ENCODE measurements at regions of chr2 and their contacts with region 1.

Region 1: DNA sequence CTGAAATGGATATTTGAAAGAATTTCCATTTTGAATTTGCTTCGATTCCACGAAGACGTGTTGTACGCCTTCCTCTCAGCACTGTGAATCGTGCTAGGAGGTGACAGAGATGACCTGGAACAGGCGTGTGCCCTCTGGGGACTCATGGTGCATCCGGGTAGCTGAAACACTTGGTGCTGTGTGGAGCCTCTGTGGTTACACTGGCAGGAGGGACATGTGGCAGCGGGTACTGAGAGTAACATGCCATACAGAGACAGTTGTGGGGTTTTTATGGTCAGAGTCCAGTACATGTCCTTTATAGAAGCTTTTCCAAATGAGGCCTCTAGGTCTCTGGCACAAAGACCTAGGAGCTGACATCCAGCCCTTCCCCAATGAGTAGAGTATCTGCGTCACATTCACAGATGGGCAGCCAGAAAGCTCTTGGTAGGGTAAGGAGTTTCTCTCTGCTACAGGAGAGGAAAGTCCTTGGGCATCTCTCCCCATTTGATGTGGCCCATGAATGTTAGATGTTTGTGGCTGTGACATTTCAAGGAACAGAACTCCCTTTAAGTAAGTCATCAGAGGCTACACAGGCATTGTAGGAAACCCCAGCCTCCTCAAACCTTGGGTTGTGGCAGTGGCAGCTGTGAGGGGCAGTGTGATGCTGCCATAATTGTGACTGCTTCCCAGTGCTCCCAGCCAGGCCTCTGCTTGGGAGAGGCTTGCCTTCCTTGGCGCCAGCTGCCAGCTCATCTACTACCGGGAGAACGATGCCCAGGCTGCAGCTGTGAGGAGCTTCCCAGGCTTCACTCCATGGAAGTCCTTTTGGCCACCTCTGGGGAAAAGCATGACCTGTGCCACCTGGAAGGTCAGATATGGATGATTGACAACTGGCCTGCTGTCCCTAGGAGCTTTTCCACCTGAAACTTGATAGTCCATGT is 80.6 kb downstream of the ACOXL start:
- DNase-seq: no peak
- ATAC-seq: no peak; the same call in 1 of the 3 replicates
- H3K4me3 ChIP-seq: no peak overlapping the region
- H3K27ac ChIP-seq: no peak overlapping the region
- H3K4me1 ChIP-seq: no peaks in the 10 kb centered on the region
- H3K27me3 ChIP-seq: peaks cover 0 to 2% of the 10 kb centered on the region in 2 experiments; a peak in 2 of 4 replicates
- CTCF ChIP-seq: no peak
- EP300 ChIP-seq: no peak
- POLR2A ChIP-seq: no peak
- RAD21 ChIP-seq: no peak

Region 2: GRCh38 chr2:110157153-110157793 is 655.7 kb before region 1 on chr2:
- CTCF ChIA-PET with region 1: no interaction called
- POLR2A ChIA-PET with region 1: no interaction called
- RAD21 ChIA-PET with region 1: no interaction called
- SMC1A ChIA-PET with region 1: no interaction called
- in situ Hi-C with region 1: no loop called
- intact Hi-C with region 1: no loop called
- DNase-seq: peak; percentile 8
- ATAC-seq: peak; percentile 86
- H3K4me3 ChIP-seq: no peak overlapping the region
- H3K27ac ChIP-seq: no peak overlapping the region
- H3K4me1 ChIP-seq: no peaks in the 10 kb centered on the region
- H3K27me3 ChIP-seq: no peaks in the 10 kb centered on the region; a peak in 1 of 4 replicates
- CTCF ChIP-seq: peak; percentile 66 to 76 (median 73)
- EP300 ChIP-seq: no peak
- POLR2A ChIP-seq: no peak
- RAD21 ChIP-seq: peak; percentile 78

Region 3: GRCh38 chr2:110741491-110741980 is 71.5 kb before region 1 on chr2:
- CTCF ChIA-PET with region 1: no interaction called
- POLR2A ChIA-PET with region 1: no interaction called
- RAD21 ChIA-PET with region 1: no interaction called
- SMC1A ChIA-PET with region 1: no interaction called
- in situ Hi-C with region 1: no loop called
- intact Hi-C with region 1: no loop called
- DNase-seq: no peak
- ATAC-seq: peak; percentile 27; the same call in 1 of the 3 replicates
- H3K4me3 ChIP-seq: no peak overlapping the region
- H3K27ac ChIP-seq: no peak overlapping the region
- H3K4me1 ChIP-seq: peaks cover 12% of the 10 kb centered on the region
- H3K27me3 ChIP-seq: no peaks in the 10 kb centered on the region
- CTCF ChIP-seq: no peak
- EP300 ChIP-seq: no peak
- POLR2A ChIP-seq: no peak
- RAD21 ChIP-seq: no peak

Region 4: DNA sequence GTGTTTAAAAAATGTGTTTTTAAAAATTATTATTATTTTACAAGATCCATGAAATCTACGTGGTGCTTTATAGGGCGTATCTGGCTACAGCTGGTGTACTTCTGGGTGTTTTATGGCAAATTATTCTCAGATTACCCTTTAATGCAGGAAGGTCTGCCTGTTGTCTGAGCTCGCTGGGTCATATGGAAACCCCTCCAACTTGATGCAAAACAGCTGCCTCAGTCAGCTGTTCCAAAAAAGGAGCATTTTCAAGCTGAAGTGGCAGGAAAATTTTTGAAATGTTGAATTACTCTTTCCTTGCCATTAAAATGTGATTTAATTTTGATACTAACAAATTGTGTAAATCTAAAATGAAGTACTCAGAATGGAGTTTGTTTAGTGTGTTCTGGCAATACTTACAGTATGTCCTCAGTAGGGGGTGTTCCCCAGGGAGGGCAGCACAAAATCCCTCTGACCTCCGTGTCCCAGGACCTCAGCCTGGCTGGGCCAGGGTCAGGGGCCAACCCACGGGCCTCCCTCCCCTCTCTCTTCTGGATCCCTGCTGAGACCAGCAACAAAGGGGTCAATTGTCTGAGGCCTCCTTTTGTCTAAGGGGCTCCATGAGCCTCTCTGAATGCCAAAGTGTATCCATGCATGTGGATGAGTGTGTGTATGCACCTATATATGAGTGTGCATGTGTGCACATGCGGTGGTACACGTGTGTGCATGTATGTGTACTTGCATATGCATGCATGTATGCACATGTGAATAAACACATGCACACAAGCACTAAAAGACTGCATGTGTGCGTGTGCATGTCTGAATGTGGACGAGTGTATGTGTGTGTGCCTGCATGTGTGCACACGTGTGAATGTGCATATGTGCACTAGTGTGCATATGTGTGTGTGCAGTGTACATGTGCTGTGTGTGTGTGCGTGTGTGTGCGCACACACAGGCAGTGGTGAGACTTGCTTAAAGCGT is 24.7 kb after region 1 on chr2:
- CTCF ChIA-PET with region 1: interaction called, 43 read pairs
- POLR2A ChIA-PET with region 1: interaction called, 5 read pairs
- RAD21 ChIA-PET with region 1: interaction called, 4 read pairs
- SMC1A ChIA-PET with region 1: interaction called, 27 read pairs
- in situ Hi-C with region 1: no loop called
- intact Hi-C with region 1: no loop called
- DNase-seq: no peak
- ATAC-seq: no peak
- H3K4me3 ChIP-seq: no peak overlapping the region
- H3K27ac ChIP-seq: no peak overlapping the region
- H3K4me1 ChIP-seq: peaks cover 3% of the 10 kb centered on the region
- H3K27me3 ChIP-seq: no peaks in the 10 kb centered on the region
- CTCF ChIP-seq: no peak
- EP300 ChIP-seq: no peak
- POLR2A ChIP-seq: no peak
- RAD21 ChIP-seq: no peak

Region 5: GRCh38 chr2:110843959-110844510 is 31.0 kb after region 1 on chr2:
- CTCF ChIA-PET with region 1: interaction called, 32 read pairs
- POLR2A ChIA-PET with region 1: interaction called, 3 read pairs
- RAD21 ChIA-PET with region 1: interaction called, 4 read pairs
- SMC1A ChIA-PET with region 1: interaction called, 6 read pairs
- in situ Hi-C with region 1: no loop called
- intact Hi-C with region 1: no loop called
- DNase-seq: no peak
- ATAC-seq: no peak
- H3K4me3 ChIP-seq: no peak overlapping the region
- H3K27ac ChIP-seq: no peak overlapping the region
- H3K4me1 ChIP-seq: peaks cover 17% of the 10 kb centered on the region
- H3K27me3 ChIP-seq: no peaks in the 10 kb centered on the region; a peak in 1 of 4 replicates
- CTCF ChIP-seq: no peak
- EP300 ChIP-seq: no peak
- POLR2A ChIP-seq: no peak
- RAD21 ChIP-seq: no peak

Region 6: DNA sequence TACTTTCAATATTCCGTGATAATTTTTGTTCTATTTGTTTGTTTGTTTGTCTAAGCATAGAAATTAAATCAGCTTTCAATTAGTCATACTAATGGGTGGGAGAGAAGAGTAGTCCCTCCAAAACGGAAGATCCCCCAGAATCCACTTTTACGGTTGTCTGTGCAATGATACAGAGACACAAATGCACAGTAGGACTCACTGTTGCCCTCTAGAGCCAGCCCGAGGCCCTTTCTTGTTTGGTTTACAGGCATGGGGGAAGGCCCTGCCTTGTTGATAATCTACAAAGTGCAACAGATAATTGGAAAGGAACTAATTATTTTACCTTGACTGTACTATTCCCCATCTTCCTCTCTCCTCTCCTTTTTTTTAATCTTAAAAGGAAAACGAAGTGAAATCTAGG is 40.5 kb after region 1 on chr2:
- CTCF ChIA-PET with region 1: interaction called, 50 read pairs
- POLR2A ChIA-PET with region 1: no interaction called
- RAD21 ChIA-PET with region 1: interaction called, 15 read pairs
- SMC1A ChIA-PET with region 1: interaction called, 29 read pairs
- in situ Hi-C with region 1: no loop called
- intact Hi-C with region 1: no loop called
- DNase-seq: no peak
- ATAC-seq: peak; percentile 79
- H3K4me3 ChIP-seq: no peak overlapping the region
- H3K27ac ChIP-seq: no peak overlapping the region
- H3K4me1 ChIP-seq: peaks cover 7% of the 10 kb centered on the region; the same call in 1 of the 2 replicates
- H3K27me3 ChIP-seq: no peaks in the 10 kb centered on the region; a peak in 1 of 4 replicates
- CTCF ChIP-seq: peak; percentile 62 to 76 (median 63)
- EP300 ChIP-seq: no peak
- POLR2A ChIP-seq: no peak
- RAD21 ChIP-seq: peak; percentile 66

Region 7: DNA sequence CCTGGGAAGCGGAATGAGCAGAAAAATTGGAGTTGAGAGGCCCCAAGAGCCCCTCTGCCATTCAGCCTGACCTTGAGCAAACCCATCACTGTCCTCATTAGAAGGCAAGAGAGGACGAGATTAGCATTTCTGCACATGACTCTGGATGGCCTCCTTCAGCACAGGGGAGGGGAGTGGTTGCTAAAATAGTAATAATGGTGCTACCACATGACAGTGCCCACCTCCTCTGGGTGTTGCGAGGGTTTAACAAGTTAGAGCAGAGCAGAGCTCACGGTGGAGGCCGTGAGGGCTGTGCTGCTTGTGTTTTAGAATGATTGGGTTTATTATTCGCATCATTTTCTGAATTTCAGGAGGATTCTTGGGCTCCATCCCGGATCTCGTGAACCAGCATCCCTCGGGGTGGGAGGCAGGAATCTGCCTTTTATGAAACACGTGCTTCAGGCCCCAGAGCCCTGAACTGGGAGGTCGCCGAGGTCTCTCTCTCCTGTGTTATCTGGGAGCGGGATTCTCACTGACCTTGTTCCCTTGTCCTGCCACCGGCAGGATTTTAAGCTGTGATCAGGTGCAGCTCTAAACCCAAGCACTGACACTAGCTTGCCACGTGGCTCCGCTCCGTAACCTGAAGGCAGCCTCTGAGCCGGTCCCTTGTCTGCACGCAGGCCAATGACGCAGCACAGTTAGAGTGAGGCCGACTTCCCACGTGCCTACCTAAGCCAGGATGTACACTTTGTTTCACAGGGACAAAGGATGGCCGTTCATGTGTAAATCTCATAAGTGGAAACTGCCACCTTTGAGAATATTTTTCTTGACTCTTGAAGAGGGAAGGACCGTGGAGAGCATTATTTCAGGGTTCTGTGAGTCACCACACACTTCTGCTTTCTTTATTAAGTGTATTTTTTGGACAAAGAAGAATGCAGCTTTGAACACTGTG is 61.7 kb after region 1 on chr2:
- CTCF ChIA-PET with region 1: interaction called, 11 read pairs
- POLR2A ChIA-PET with region 1: no interaction called
- RAD21 ChIA-PET with region 1: interaction called, 3 read pairs
- SMC1A ChIA-PET with region 1: interaction called, 4 read pairs
- in situ Hi-C with region 1: no loop called
- intact Hi-C with region 1: no loop called
- DNase-seq: peak; percentile 75
- ATAC-seq: peak; percentile 79
- H3K4me3 ChIP-seq: no peak overlapping the region
- H3K27ac ChIP-seq: 0 out of 2 replicates have a peak overlapping the region, but pooled peaks have one; percentile 22
- H3K4me1 ChIP-seq: peaks cover 46% of the 10 kb centered on the region
- H3K27me3 ChIP-seq: no peaks in the 10 kb centered on the region
- CTCF ChIP-seq: no peak
- EP300 ChIP-seq: no peak
- POLR2A ChIP-seq: no peak
- RAD21 ChIP-seq: no peak

Region 8: GRCh38 chr2:110891626-110892025 is 78.6 kb after region 1 on chr2:
- CTCF ChIA-PET with region 1: no interaction called
- POLR2A ChIA-PET with region 1: no interaction called
- RAD21 ChIA-PET with region 1: no interaction called
- SMC1A ChIA-PET with region 1: no interaction called
- in situ Hi-C with region 1: no loop called
- intact Hi-C with region 1: no loop called
- DNase-seq: no peak
- ATAC-seq: no peak
- H3K4me3 ChIP-seq: no peak overlapping the region
- H3K27ac ChIP-seq: no peak overlapping the region
- H3K4me1 ChIP-seq: no peaks in the 10 kb centered on the region
- H3K27me3 ChIP-seq: peaks cover 0 to 4% of the 10 kb centered on the region in 2 experiments; a peak in 1 of 4 replicates
- CTCF ChIP-seq: no peak
- EP300 ChIP-seq: no peak
- POLR2A ChIP-seq: no peak
- RAD21 ChIP-seq: no peak

Region 9: DNA sequence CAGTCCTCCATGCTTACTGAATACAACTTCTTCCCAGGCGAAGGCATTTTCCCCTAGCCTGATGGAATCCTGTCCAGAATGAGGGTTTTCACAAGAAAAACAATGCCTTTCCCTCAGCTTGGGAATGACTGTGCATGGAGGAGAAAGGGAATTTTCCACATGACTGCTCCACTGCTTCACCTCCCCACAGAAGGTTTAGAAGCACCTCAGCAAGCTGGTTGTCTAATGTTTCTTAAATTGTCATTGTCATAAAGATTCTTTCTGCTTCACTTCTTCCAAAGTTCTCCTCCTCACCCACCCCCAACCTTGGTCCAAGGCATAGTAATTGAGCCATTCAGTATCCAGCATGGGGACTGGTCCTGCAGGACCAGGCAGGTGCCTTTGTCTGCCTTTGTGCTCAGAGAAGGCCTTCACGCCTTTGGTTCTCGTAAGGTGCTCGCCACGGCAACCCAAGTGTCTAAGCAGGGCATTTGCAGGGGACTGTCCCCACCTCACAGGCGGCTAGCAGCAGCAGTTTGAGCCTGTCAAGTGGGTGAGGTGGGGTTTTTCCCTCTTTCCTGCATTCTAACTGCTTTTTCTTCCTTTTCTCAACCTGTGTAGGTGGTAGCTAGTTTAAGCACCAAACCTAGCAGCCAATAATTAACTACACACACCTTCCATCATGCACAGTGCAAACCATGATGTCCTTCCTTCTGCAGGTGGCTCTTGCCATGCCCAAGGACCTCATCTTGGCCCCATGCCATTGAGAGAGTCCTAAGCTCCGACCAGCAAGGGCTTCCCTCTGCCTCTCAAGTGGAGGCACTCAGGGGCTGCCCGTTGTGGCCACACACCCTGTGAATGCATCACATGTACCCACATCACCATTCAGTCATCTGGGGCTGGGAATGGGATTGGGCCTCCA is 242.1 kb after region 1 on chr2:
- CTCF ChIA-PET with region 1: interaction called, 4 read pairs
- POLR2A ChIA-PET with region 1: no interaction called
- RAD21 ChIA-PET with region 1: interaction called, 18 read pairs
- SMC1A ChIA-PET with region 1: interaction called, 3 read pairs
- in situ Hi-C with region 1: no loop called
- intact Hi-C with region 1: no loop called
- DNase-seq: peak; percentile 75
- ATAC-seq: peak; percentile 84
- H3K4me3 ChIP-seq: no peak overlapping the region
- H3K27ac ChIP-seq: no peak overlapping the region
- H3K4me1 ChIP-seq: peaks cover 45% of the 10 kb centered on the region
- H3K27me3 ChIP-seq: peaks cover 0 to 17% of the 10 kb centered on the region in 2 experiments; a peak in 3 of 4 replicates
- CTCF ChIP-seq: no peak
- EP300 ChIP-seq: peak; percentile 84 to 88; a peak in 3 of 4 replicates
- POLR2A ChIP-seq: no peak
- RAD21 ChIP-seq: 0 out of 2 replicates have a peak, but pooled peaks have one; percentile 1

Region 10: DNA sequence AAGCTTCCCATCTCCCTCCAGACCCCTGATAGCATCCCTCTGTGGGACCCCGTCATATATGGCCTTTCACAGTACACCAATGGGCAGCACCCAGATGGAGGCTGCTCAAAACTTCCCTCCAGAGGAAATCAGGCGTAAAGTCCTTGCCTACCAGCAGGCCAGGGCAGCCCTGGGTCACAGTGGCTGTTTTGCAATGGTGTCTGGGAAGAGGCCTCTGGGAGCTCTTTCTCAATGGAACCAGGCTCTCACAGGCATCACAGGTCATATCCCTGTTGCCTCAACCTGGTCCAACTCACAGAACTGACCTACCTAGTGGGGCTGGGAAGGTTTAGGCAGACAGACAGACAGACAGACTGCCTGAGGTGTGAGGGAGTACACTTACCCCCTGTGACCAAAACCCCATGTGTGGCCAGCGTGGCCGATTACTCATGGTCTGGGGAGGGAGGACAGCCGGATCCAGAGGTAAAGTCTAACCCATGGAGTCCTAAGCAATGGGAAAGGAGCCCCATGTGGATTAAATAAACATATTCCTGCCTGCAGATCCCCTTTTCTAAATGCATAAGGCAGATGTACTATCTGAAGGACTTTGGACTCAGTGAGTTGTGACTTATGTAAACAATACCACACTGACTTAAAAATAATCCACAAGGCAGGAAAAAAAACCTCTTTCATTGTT is 365.9 kb after region 1 on chr2:
- CTCF ChIA-PET with region 1: no interaction called
- POLR2A ChIA-PET with region 1: no interaction called
- RAD21 ChIA-PET with region 1: no interaction called
- SMC1A ChIA-PET with region 1: no interaction called
- in situ Hi-C with region 1: no loop called
- intact Hi-C with region 1: no loop called
- DNase-seq: no peak
- ATAC-seq: peak; percentile 37
- H3K4me3 ChIP-seq: no peak overlapping the region
- H3K27ac ChIP-seq: no peak overlapping the region
- H3K4me1 ChIP-seq: no peaks in the 10 kb centered on the region
- H3K27me3 ChIP-seq: peaks cover 0 to 8% of the 10 kb centered on the region in 2 experiments; a peak in 3 of 4 replicates
- CTCF ChIP-seq: no peak
- EP300 ChIP-seq: no peak
- POLR2A ChIP-seq: no peak
- RAD21 ChIP-seq: no peak

Measured in GM12878 (cell line).